ENCODE measurements at regions of chr9 and their contacts with region 1.

Region 1: GRCh38 chr9:37262410-37262809 is 142.0 kb downstream of the ZCCHC7 start:
- DNase-seq: peak; percentile 57
- H3K4me3 ChIP-seq: no peak overlapping the region
- H3K27ac ChIP-seq: no peak overlapping the region
- H3K4me1 ChIP-seq: no peaks in the 10 kb centered on the region
- H3K27me3 ChIP-seq: no peaks in the 10 kb centered on the region

Region 2: DNA sequence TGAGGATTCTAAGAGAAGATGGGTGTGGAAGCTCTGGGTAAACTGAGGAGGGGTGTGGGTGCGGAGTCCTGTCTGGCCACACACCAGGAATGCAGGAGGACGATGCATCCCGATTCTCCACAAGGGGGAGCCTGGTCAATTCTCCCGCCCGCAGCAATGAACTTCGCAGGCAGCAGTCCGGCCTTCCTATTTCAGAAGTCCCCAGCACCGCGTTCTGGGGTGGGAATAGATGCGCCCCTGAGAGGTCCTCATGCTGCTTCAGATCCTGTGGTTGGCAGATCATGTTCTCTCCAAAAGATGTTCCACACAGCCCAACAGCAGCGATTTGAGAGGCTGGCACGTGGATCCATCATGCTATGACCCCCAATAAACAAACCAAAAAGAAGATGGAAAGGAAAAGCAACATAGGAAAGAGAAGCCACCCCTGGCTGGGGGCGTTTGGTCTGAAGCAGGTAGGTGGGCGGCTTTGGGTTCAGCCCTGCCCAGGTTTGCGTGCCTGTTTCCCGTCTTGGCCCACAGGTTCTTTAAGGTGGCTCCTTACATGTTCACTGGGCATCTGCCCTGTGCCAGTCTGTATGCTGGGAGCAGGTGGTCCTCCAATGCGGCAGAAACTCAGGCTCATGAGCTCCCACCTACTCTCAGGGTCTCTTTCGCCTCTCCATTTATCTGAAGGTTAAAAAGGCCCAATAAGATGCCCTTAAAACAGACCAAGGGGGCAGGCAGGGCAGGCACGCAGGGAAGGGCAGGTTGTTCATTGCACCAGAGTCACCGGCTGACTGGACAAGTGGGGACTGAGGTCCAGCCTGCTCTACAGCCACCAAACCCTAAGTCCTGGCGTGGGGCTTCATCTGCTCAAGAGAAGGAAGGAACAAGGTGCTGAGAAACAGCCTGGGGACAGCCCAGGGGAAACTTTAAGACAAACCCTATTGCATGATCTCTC is 399.9 kb before region 1 on chr9:
- in situ Hi-C with region 1: loop called (anchors 10 kb)
- DNase-seq: peak; percentile 66
- H3K4me3 ChIP-seq: no peak overlapping the region
- H3K27ac ChIP-seq: no peak overlapping the region
- H3K4me1 ChIP-seq: no peaks in the 10 kb centered on the region
- H3K27me3 ChIP-seq: peaks cover 56% of the 10 kb centered on the region

Region 3: GRCh38 chr9:37191403-37192089 is 70.9 kb before region 1 on chr9:
- in situ Hi-C with region 1: no loop called
- DNase-seq: no peak
- H3K4me3 ChIP-seq: no peak overlapping the region
- H3K27ac ChIP-seq: no peak overlapping the region
- H3K4me1 ChIP-seq: peaks cover 10% of the 10 kb centered on the region
- H3K27me3 ChIP-seq: no peaks in the 10 kb centered on the region

Region 4: DNA sequence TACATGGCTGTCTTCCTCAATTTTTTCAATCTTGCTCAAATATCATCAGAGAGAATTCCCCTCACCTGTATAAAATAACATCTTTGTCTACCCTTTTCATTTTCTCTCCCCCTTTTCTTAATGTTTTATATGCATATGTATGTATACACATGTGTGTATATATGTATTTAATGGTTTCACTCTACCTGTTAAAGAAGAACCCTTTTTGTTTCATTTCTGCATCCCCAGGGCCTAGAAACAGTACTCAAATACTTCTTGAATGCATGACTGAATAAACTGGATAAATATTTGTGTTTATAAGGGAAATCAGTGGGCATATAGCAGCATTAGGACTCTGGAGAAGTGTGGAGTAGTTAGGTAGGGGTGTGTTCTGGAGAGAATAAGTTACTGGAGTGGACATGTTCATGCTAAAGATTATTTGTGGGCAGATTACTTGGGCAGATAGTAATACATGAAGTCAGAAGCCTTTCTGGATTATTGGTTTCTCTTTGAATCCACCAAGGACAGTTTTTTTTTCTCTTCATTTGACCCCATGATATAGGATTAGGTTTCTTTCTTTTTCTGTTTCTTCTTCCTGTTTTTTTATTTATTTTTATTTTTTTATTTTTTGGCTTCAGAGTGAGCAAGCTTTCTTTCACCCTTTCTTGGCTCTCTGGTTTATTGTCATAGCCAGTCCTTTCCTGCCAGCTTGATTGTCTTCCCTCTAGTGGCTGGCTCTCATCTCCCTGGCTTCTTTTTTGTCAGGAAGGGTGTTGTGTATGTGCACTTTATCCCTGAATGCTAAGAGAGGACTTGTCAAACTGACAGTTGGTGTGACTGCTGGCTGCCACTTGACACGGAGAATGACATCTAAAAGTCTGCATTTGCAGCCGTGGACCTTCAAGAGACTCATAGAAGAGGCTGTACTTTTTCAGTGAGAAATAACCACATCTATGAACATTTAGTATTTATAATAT is 52.7 kb before region 1 on chr9:
- in situ Hi-C with region 1: loop called (anchors 10 kb)
- DNase-seq: peak; percentile 17
- H3K4me3 ChIP-seq: no peak overlapping the region
- H3K27ac ChIP-seq: no peak overlapping the region
- H3K4me1 ChIP-seq: 0 out of 2 replicates have a peak, but pooled peaks cover 4% of the 10 kb centered on the region
- H3K27me3 ChIP-seq: no peaks in the 10 kb centered on the region

Region 5: DNA sequence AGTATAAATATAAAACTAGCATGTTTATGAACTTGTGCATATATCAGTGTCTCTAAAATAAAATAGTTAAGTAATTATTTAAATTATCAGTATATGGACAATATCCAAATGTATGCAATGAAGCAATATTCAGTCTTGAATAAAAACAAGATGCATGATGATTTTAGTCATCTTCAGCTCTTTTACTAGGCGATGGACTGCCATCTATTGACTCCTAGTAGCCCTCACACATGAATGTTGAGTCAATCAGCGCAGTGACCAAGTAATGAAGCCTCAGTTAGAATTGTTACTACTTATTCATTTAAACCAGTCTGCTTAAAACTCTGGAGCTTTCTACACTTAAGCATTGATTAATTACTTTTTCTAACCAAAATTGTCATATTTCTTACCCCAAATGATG is 67.2 kb after region 1 on chr9:
- in situ Hi-C with region 1: loop called (anchors 10 kb)
- DNase-seq: peak; percentile 57
- H3K4me3 ChIP-seq: no peak overlapping the region
- H3K27ac ChIP-seq: no peak overlapping the region
- H3K4me1 ChIP-seq: no peaks in the 10 kb centered on the region
- H3K27me3 ChIP-seq: no peaks in the 10 kb centered on the region